Gastrocnemius medialis (tissue), 4 donors: ENCODE measurements at regions of chr1 and their contacts with region 1.

Region 1: DNA sequence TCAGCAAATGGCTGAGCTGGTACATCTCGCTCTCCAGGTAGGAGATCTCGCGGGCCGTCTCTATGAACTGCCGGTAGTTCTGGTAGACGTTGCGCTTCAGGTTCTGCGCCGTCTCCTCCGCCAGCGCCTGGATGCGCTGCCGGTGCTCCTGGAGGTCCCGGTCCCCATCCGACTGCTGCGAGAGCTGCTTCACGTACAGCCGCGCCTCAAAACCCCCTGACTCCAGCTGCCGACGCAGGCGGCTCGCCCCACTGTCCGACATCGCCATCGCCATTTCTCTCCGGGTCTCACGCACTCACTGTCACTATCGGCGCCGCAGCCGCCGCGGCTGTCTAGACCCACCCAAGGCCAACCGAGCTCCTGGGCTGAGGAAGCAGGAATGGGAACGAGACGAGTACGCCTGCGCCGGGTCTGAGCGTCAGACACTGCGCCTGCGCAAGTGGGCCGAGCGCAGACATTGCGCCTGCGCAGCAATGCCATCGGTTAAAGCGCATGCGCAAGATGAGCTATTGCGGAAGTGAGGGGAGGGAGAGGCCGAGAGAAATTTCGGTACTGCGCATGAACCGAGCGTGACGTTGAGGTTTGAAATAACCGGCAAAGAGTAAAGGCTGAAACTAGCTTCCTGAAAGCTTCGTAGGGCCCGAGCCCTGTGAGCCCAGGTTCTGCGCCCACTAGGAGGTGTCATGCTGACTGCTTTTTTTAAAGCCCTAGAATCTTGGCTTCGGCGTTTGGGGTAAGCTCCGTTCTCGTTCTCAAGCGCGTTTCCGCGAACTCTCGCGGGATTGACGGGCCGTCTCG is at the start of gene EXOC8:
- DNase-seq: peak; percentile 91 to 94
- ATAC-seq: peak; percentile 80 to 88
- H3K4me3 ChIP-seq: peak within 1 kb of the TSS; percentile 75 to 91 (median 77)
- H3K27ac ChIP-seq: peak within 1 kb of the TSS; percentile 88 to 92 (median 90)
- H3K4me1 ChIP-seq: peaks cover 40% of the 10 kb centered on the region in 2 donors
- H3K27me3 ChIP-seq: no peaks in the 10 kb centered on the region
- CTCF ChIP-seq: no peak
- POLR2A ChIP-seq: peak; percentile 90 to 96
- total RNA-seq, gene EXOC8: 25.4 to 50.9 (median 38.2) TPM

Region 2: DNA sequence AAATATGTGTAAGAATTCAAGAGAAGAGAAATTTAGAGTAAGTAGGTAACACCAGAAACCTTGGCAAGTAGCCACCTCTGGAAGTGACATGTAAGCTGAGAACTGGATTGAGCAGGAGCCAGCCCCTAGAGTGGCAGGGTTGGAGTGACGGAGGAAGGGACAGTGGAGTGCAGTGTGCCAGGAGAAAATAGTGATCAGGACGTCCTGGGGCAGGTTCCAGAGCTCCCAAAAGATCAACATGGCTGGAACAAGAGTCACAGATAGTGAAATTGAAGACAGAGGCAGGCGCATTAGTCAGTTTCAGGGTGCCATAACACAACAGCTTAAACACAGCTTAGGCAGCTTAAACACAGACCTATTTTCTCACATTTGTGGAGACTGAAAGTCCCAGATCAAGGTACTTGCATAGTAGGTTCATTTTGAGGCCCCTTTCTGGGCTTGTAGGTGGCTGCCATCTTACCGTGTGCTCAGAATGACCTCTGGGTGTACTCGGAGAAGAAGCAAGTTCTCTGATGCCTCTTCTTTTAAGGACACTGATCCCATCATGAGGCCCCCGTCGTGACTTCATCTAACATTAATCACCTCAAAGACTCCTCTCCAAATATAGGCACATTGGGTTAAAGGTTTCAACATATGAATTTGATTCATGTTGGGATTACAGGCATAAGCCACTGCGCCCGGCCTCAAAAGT is 59.4 kb before region 1 on chr1:
- in situ Hi-C with region 1: no loop called
- intact Hi-C with region 1: loop called (anchors 1 kb)
- DNase-seq: peak; percentile 94 to 95
- ATAC-seq: peak; percentile 96
- H3K4me3 ChIP-seq: no peak overlapping the region
- H3K27ac ChIP-seq: peak overlapping the region; percentile 89 to 96 (median 92)
- H3K4me1 ChIP-seq: peaks cover 18 to 28% of the 10 kb centered on the region in 2 donors
- H3K27me3 ChIP-seq: no peaks in the 10 kb centered on the region
- CTCF ChIP-seq: no peak
- POLR2A ChIP-seq: peak; percentile 42 to 62

Region 3: DNA sequence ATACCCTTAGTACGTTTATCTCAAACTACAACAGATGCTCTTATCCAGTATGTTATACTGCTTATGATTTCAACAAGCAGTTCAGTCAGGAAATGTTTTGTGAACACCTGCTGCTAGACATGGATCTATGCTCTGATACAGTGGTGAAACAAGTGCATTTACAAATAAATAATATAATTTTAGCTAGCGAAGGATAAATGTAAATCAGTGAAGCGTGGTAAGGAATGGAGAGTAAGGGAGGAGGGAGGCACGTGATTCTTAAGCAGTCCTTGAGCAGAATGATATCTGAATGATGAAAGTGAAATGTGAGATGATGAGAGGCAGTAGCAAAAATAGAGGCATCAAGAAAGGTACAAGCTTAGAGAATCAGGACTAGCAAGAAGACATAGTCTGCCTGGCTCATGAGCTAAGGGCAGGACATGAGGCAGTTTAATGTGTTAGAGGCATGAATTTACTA is 197.1 kb after region 1 on chr1:
- in situ Hi-C with region 1: no loop called
- intact Hi-C with region 1: loop called (anchors 2 kb)
- DNase-seq: peak in 1 of 2 donors; percentile 36
- ATAC-seq: peak; percentile 98 to 99
- H3K4me3 ChIP-seq: peak overlapping the region; percentile 21 to 40 (median 31)
- H3K27ac ChIP-seq: peak overlapping the region; percentile 94 to 99 (median 96)
- H3K4me1 ChIP-seq: peaks cover 33 to 71% of the 10 kb centered on the region in 2 donors
- H3K27me3 ChIP-seq: no peaks in the 10 kb centered on the region
- CTCF ChIP-seq: no peak
- POLR2A ChIP-seq: peak; percentile 72 to 92

Region 4: DNA sequence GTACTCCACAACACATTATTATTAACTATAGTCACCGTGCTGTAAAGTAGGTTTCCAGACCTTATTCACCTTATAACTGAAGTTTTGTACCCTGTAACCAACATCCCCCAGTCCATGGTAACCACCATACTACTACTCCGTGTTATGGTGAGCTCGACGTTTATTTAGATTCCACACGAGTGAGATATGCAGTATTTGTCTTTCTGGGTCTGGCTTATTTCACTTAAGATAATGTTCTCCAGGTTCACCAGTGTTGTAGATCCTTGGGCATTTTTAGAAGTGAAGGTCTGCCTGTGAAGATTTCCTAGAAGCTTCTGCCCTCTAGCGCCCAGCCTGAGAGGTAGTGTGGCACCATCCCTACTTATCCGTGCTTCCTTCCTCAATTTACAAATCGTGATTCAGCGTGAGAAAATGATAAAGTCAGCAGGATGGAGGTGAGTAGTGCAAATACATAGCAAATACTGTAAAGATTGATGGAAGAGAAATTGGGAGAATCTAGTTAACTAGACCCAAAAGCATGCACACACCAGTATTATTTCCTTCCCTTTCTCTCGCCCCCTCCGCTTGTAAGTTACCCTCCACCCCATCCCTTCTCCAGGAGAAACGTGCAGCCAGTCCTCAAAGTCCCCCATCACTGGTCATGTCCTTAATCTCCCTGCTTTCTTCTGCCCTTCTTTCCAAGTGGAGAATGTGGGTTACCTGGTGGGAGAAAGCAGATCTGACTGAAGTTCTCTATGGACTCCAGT is 253.0 kb after region 1 on chr1:
- in situ Hi-C with region 1: no loop called
- intact Hi-C with region 1: loop called (anchors 5 kb)
- DNase-seq: peak in 1 of 2 donors; percentile 32
- ATAC-seq: peak; percentile 82 to 92
- H3K4me3 ChIP-seq: no peak overlapping the region
- H3K27ac ChIP-seq: peak overlapping the region in 3 of 4 donors; percentile 20 to 42 (median 36)
- H3K4me1 ChIP-seq: peaks cover 3 to 12% of the 10 kb centered on the region in 2 donors
- H3K27me3 ChIP-seq: no peaks in the 10 kb centered on the region
- CTCF ChIP-seq: peak; percentile 61 to 76 (median 72)
- POLR2A ChIP-seq: no peak